Activated T-helper 2 cell treated with anti-CD3 and anti-CD28 coated beads, Interferon-gamma antibody, Interleukin-2, Interleukin-4, amounts not matched to agents 10 μg/mL and 5 μg/mL and 100 μg/mL, durations not matched to agents 14 hours and 24 hours and 36 hours (primary cell): ENCODE measurements at regions of chr9 and their contacts with region 1.

Region 1: GRCh38 chr9:14661421-14662059 is 31.7 kb downstream of the ZDHHC21 start:
- DNase-seq: no peak
- H3K4me3 Mint-ChIP-seq: no peak overlapping the region
- H3K27ac Mint-ChIP-seq: no peak overlapping the region
- H3K4me1 Mint-ChIP-seq: no peaks in the 10 kb centered on the region
- H3K27me3 Mint-ChIP-seq: no peaks in the 10 kb centered on the region

Region 2: GRCh38 chr9:14616188-14616982 is 45.2 kb before region 1 on chr9:
- intact Hi-C with region 1: loop called (anchors 1 kb)
- DNase-seq: no peak
- H3K4me3 Mint-ChIP-seq: no peak overlapping the region
- H3K27ac Mint-ChIP-seq: no peak overlapping the region
- H3K4me1 Mint-ChIP-seq: no peaks in the 10 kb centered on the region
- H3K27me3 Mint-ChIP-seq: no peaks in the 10 kb centered on the region